Right ventricle myocardium inferior (tissue), 1 donor: ENCODE measurements at regions of chr18 and their contacts with region 1.

Region 1: GRCh38 chr18:7459851-7460770 is 107.0 kb upstream of the PTPRM start:
- DNase-seq: peak; percentile 81
- ATAC-seq: peak; percentile 83

Region 2: GRCh38 chr18:6891788-6892187 is 568.3 kb before region 1 on chr18:
- intact Hi-C with region 1: no loop called
- DNase-seq: no peak
- ATAC-seq: no peak

Region 3: DNA sequence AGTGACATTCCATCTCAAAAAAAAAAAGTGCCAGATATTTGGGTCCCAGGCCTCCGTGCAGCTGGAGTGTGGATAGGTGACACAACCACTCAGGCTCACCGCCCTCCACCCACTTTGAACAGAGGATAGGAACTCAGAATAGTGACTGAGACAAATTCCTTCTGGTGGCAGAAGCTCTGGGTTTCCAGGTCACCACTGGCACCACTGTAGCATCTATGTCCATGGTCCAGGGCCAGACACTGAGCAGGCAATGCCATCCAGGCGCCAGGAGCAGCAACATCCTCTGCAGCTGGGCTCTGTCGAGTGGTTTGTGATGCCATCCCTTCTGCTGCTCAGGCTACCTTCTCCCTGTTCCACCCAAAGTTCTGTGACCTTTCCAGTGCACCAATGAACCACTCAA is 25.5 kb after region 1 on chr18:
- intact Hi-C with region 1: loop called (anchors 2 kb)
- DNase-seq: no peak
- ATAC-seq: peak; percentile 84